Activated T-helper 2 cell treated with anti-CD3 and anti-CD28 coated beads, Interferon-gamma antibody, Interleukin-2, Interleukin-4, amounts not matched to agents 10 μg/mL and 5 μg/mL and 100 μg/mL, durations not matched to agents 14 hours and 24 hours and 36 hours (primary cell): ENCODE measurements at regions of chr12 and their contacts with region 1.

Region 1: GRCh38 chr12:50025187-50026059 is at the start of gene RACGAP1:
- DNase-seq: peak; percentile 96
- H3K4me3 Mint-ChIP-seq: peak within 1 kb of the TSS; percentile 99
- H3K27ac Mint-ChIP-seq: peak within 1 kb of the TSS; percentile 98
- H3K4me1 Mint-ChIP-seq: peaks cover 30% of the 10 kb centered on the region
- H3K27me3 Mint-ChIP-seq: no peaks in the 10 kb centered on the region
- total RNA-seq, gene RACGAP1: 77.8 and 82.8 TPM in 2 replicates

Region 2: DNA sequence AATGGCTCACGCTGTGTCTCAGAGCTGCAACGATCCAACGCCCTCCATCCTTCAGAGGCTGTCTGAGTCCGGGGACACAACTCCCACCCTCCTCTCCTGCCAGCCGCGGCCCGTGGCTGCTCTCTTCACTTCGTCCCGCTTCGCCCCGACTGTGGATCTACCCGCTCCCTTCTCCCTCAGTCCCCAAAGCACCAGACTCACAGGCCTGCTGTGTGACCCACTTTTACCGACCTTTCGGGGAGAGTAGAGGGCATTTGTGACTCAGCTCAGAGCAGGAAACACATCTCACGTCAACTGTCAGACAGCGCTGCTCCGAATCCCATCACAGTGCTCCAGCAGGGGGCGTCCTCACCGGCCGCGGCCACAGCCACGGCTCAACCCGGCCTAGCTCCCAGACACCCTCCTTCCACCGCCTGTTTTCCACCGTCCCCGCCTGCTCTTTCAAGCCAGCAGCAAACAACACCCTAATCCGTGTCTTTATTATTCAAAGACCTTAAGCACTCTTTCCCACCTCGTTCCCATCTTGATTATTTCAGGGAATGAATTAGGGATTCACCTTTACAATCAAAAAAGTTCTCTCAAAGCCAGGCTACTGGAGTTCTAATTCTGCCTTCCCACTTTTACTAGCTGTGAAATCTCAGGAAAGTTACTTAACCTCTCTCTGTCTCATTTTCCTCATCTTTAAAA is 79.9 kb before region 1 on chr12:
- intact Hi-C with region 1: no loop called
- DNase-seq: peak; percentile 77
- H3K4me3 Mint-ChIP-seq: peak overlapping the region; percentile 72
- H3K27ac Mint-ChIP-seq: peak overlapping the region; percentile 92
- H3K4me1 Mint-ChIP-seq: peaks cover 22% of the 10 kb centered on the region
- H3K27me3 Mint-ChIP-seq: no peaks in the 10 kb centered on the region

Region 3: DNA sequence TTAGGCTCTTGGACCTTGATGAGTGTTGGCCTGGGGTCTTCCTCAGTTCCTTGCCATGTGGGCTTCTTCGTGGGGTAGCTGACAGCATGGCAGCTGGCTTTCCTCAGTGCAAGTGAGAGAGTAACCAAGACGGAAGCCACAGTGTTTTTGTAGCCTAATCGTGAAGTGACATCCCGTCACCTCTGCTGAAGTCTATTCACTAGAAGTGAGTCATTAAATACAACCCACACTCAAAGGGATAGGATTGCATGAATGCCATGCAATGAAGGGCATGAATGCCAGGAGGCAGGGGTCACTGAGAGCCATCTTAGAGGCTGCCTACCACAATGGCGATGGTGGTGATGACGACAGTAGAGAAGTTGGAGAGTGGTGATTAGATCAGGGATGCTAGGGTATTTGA is 18.4 kb after region 1 on chr12:
- intact Hi-C with region 1: loop called (anchors 1 kb)
- DNase-seq: no peak
- H3K4me3 Mint-ChIP-seq: no peak overlapping the region
- H3K27ac Mint-ChIP-seq: peak overlapping the region; percentile 79
- H3K4me1 Mint-ChIP-seq: peaks cover 36% of the 10 kb centered on the region
- H3K27me3 Mint-ChIP-seq: peaks cover 2% of the 10 kb centered on the region